ENCODE measurements at regions of chr6 and their contacts with region 1.

Region 1: GRCh38 chr6:127824061-127824460 is 76.8 kb downstream of the THEMIS start:
- DNase-seq: no peak
- ATAC-seq: no peak
- H3K4me3 ChIP-seq: no peak overlapping the region
- H3K4me3 Mint-ChIP-seq: peak overlapping the region in 2 of 3 donors; percentile 9 to 26
- H3K27ac ChIP-seq: no peak overlapping the region
- H3K27ac Mint-ChIP-seq: peak overlapping the region; percentile 36 to 68
- H3K4me1 ChIP-seq: peaks cover 0 to 16% of the 10 kb centered on the region in 2 experiments
- H3K4me1 Mint-ChIP-seq: peaks cover 78 to 80% (median 78%) of the 10 kb centered on the region in 3 donors
- H3K27me3 ChIP-seq: no peaks in the 10 kb centered on the region
- H3K27me3 Mint-ChIP-seq: no peaks in the 10 kb centered on the region

Region 2: GRCh38 chr6:127748290-127748689 is 75.8 kb before region 1 on chr6:
- CTCF ChIA-PET with region 1: no interaction called
- POLR2A ChIA-PET with region 1: interaction called, 4 to 10 read pairs
- DNase-seq: no peak
- ATAC-seq: peak in 3 of 4 experiments; percentile 11 to 31 (median 29)
- H3K4me3 ChIP-seq: no peak overlapping the region
- H3K4me3 Mint-ChIP-seq: peak overlapping the region in 1 of 3 donors; percentile 2
- H3K27ac ChIP-seq: no peak overlapping the region
- H3K27ac Mint-ChIP-seq: peak overlapping the region; percentile 85
- H3K4me1 ChIP-seq: peaks cover 3 to 5% of the 10 kb centered on the region in 2 experiments
- H3K4me1 Mint-ChIP-seq: peaks cover 57 to 70% (median 65%) of the 10 kb centered on the region in 3 donors
- H3K27me3 ChIP-seq: no peaks in the 10 kb centered on the region
- H3K27me3 Mint-ChIP-seq: no peaks in the 10 kb centered on the region

Region 3: DNA sequence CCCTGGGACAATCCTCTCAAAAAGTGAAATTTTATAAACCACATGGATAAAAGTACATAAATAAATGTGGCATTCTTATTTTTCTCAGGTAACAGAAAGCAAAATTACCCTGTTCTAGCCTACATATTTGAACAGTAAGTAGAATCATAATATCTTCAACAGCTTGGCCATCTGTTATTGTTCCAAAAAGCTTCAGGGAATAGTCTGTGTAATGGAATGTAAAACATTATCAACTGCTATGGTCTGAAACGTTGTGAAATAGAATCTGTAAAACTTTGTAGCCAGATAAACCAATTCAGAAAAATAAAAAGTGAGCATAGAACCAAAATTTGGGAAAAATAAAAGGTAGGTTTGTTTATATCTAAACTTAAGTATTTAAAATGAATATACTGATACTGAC is 38.0 kb before region 1 on chr6:
- CTCF ChIA-PET with region 1: no interaction called
- POLR2A ChIA-PET with region 1: interaction called in 1 of 2 experiments, 10 read pairs
- DNase-seq: no peak
- ATAC-seq: no peak
- H3K4me3 ChIP-seq: no peak overlapping the region
- H3K4me3 Mint-ChIP-seq: no peak overlapping the region
- H3K27ac ChIP-seq: no peak overlapping the region
- H3K27ac Mint-ChIP-seq: no peak overlapping the region
- H3K4me1 ChIP-seq: peaks cover 21 to 25% of the 10 kb centered on the region in 2 experiments
- H3K4me1 Mint-ChIP-seq: peaks cover 78 to 91% (median 88%) of the 10 kb centered on the region in 3 donors
- H3K27me3 ChIP-seq: no peaks in the 10 kb centered on the region
- H3K27me3 Mint-ChIP-seq: no peaks in the 10 kb centered on the region

Region 4: GRCh38 chr6:127956260-127956874 is 132.3 kb after region 1 on chr6:
- CTCF ChIA-PET with region 1: no interaction called
- POLR2A ChIA-PET with region 1: interaction called in 1 of 2 experiments, 22 read pairs
- DNase-seq: no peak
- ATAC-seq: no peak
- H3K4me3 ChIP-seq: no peak overlapping the region
- H3K4me3 Mint-ChIP-seq: no peak overlapping the region
- H3K27ac ChIP-seq: no peak overlapping the region
- H3K27ac Mint-ChIP-seq: no peak overlapping the region
- H3K4me1 ChIP-seq: peaks cover 11 to 18% of the 10 kb centered on the region in 2 experiments
- H3K4me1 Mint-ChIP-seq: peaks cover 35 to 40% (median 37%) of the 10 kb centered on the region in 3 donors
- H3K27me3 ChIP-seq: no peaks in the 10 kb centered on the region
- H3K27me3 Mint-ChIP-seq: no peaks in the 10 kb centered on the region

Region 5: DNA sequence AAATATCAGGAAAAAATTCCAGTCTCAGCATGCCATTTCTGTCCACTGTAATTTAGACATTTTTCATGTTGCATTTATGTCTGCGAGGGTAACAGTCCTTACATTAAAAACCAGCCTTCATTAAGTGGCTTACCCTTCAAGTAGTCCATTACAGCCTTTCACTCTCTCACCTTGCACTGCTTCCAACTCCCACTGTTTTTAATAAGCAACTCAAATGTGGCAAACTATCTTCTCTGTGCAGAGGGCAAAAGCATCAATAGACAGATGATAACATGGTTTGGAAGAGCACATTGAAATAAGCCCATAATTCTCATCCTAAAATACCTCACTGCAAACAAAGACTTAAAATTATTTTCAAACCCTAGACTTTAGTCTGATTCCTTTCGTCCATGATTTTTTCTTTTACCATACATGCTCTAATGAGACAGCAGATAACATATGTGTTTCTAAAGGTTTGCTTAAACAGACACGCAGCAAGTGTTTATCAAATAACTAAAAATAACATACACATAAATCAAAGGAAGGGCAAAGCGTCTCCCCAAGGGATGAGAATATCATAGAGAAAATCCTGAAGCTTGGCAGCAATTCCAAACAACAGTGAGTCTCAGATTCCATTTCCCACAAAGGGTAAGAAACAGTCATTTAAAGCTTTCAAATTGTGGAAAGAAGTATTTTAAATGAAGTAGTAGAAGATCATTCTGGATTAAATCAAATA is 565.9 kb after region 1 on chr6:
- CTCF ChIA-PET with region 1: interaction called in 1 of 2 experiments, 11 read pairs
- POLR2A ChIA-PET with region 1: no interaction called
- DNase-seq: no peak
- ATAC-seq: no peak
- H3K4me3 ChIP-seq: no peak overlapping the region
- H3K4me3 Mint-ChIP-seq: no peak overlapping the region
- H3K27ac ChIP-seq: no peak overlapping the region
- H3K27ac Mint-ChIP-seq: no peak overlapping the region
- H3K4me1 ChIP-seq: no peaks in the 10 kb centered on the region
- H3K4me1 Mint-ChIP-seq: no peaks in the 10 kb centered on the region
- H3K27me3 ChIP-seq: no peaks in the 10 kb centered on the region
- H3K27me3 Mint-ChIP-seq: no peaks in the 10 kb centered on the region

Region 6: DNA sequence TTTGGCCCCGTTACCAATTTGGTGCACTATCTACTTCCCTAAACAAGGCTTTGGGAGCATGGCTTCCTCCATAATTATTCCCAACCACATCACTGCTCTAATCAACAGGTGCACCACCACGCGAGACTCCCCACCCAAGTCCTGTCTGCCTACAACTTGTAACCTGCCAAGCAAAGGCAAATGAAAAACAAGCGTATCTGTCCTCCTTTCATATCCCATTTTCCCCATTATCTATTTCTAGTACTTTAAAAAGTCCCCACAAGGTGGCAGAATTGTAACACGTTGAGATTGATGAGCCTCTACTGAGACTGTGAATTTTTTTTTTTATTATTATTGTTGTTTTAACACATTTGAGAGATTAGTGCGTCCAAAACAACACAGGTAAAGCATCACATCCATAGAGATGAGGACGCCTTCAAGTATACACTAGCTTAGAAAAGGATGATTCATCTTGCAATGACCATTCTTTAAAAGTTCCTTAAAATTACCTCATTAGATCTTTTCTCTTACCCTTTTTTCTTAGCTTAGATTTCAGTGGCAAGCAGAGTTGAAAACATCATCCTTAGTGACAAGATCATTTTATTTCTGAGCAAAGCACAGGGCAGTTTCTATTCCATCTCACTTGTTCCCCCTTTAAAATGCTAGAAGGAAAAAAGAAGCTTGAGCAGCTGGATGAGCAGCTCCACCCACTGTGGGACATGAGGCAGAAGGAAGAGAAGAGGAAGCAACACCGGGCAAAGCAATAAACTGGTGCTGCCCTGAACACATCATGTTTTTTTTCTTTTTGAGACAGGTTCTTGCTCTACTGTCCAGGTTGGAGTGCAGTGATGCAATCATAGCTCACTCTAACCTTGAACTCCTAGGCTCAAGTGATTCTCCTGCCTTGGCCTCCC is 1675.1 kb after region 1 on chr6:
- CTCF ChIA-PET with region 1: no interaction called
- POLR2A ChIA-PET with region 1: no interaction called
- DNase-seq: peak in 6 of 35 experiments; percentile 2 to 78 (median 9)
- ATAC-seq: peak; percentile 72 to 80 (median 74)
- H3K4me3 ChIP-seq: no peak overlapping the region
- H3K4me3 Mint-ChIP-seq: peak overlapping the region; percentile 28 to 64 (median 48)
- H3K27ac ChIP-seq: no peak overlapping the region
- H3K27ac Mint-ChIP-seq: peak overlapping the region in 1 of 2 donors; percentile 15
- H3K4me1 ChIP-seq: peaks cover 2 to 14% of the 10 kb centered on the region in 2 experiments
- H3K4me1 Mint-ChIP-seq: peaks cover 9 to 28% (median 22%) of the 10 kb centered on the region in 3 donors
- H3K27me3 ChIP-seq: no peaks in the 10 kb centered on the region
- H3K27me3 Mint-ChIP-seq: no peaks in the 10 kb centered on the region

Measured in T-cell (primary cell).